Endothelial cell of umbilical vein (primary cell): ENCODE measurements at regions of chr15 and their contacts with region 1.

Region 1: DNA sequence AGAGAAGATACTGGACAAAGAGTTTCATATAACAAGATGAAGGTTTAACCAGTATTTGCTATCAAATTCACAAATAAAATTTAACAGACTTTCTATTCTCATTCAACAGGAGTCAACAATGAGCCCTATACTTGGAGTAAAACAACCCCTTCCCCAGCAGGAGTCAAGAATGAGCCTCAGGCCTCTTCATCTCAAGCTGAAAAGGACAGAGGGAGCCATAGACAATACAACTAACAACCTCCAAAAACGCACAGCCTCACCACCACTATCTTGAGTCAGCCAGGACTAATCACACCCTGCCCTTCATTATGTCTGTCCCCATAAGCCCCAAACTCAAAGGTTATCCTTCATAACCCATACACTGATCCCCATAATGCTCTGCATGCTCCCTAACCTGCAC is 36.4 kb downstream of the ETFA start:
- DNase-seq: no peak
- H3K4me3 ChIP-seq: no peak overlapping the region
- H3K27ac ChIP-seq: no peak overlapping the region
- H3K4me1 ChIP-seq: peaks cover 5% of the 10 kb centered on the region
- H3K27me3 ChIP-seq: no peaks in the 10 kb centered on the region
- CTCF ChIP-seq: no peak
- POLR2A ChIP-seq: no peak

Region 2: GRCh38 chr15:76196269-76197231 is 78.3 kb before region 1 on chr15:
- CTCF ChIA-PET with region 1: no interaction called
- POLR2A ChIA-PET with region 1: no interaction called
- dilution Hi-C with region 1: no loop called
- intact Hi-C with region 1: loop called (anchors 5 kb)
- DNase-seq: peak; percentile 86
- H3K4me3 ChIP-seq: no peak overlapping the region
- H3K27ac ChIP-seq: no peak overlapping the region
- H3K4me1 ChIP-seq: peaks cover 14% of the 10 kb centered on the region
- H3K27me3 ChIP-seq: peaks cover 0 to 2% of the 10 kb centered on the region in 2 experiments
- CTCF ChIP-seq: no peak
- POLR2A ChIP-seq: no peak